ENCODE measurements at regions of chr11 and their contacts with region 1.

Region 1: DNA sequence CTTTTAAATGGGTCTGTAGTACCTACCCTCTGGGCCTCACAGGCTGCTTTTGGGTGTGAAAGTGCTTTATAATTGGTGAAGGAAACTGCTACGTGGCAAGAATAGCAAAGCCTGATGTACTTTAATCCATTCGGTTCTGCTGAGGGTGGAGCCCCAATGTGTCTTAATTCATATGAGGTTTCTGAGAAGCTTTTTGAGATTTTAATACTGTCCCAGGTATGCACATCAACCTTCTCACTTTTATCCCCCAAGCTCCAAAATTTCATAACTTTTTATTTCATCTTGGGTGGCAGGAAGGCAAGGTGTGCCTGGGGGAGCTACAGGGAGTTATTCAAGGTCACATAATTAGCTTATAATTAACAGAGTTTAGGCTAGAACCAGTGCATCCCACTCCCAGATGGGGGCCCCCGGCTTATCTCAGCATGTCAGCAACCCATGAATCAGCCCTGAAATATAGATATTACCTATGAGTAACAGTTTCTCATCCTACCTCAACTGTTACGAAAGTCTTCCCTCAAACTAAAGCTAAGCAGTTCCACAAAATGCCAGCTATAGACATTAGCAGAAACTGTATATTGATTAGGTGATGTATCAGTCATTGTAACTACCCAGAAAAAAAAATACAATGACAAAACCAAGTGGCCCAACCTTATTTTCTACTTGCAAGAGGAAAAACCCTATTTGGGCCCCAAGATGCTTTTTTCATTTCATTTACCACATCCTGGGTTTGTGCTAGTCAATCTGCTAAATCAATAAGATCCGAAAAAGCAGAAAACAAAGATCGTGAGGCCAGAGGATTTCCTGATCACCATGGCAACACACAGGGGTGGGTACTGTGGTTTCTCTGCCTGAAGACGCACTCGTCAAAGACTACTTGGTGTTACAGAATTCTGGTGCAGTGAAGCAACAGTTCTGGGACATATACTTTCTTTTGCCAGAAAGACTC is 26.7 kb downstream of the CD44 start:
- DNase-seq: peak; percentile 96 to 98 (median 98)
- H3K4me3 ChIP-seq: peak overlapping the region; percentile 36 to 37
- H3K4me3 Mint-ChIP-seq: peak overlapping the region; percentile 77 to 87 (median 84)
- H3K27ac ChIP-seq: peak overlapping the region; percentile 96
- H3K27ac Mint-ChIP-seq: peak overlapping the region; percentile 93 to 100 (median 100)
- H3K4me1 ChIP-seq: peaks cover 98% of the 10 kb centered on the region
- H3K4me1 Mint-ChIP-seq: peaks cover 85 to 100% (median 94%) of the 10 kb centered on the region in 4 donors
- H3K27me3 ChIP-seq: no peaks in the 10 kb centered on the region
- H3K27me3 Mint-ChIP-seq: no peaks in the 10 kb centered on the region

Region 2: DNA sequence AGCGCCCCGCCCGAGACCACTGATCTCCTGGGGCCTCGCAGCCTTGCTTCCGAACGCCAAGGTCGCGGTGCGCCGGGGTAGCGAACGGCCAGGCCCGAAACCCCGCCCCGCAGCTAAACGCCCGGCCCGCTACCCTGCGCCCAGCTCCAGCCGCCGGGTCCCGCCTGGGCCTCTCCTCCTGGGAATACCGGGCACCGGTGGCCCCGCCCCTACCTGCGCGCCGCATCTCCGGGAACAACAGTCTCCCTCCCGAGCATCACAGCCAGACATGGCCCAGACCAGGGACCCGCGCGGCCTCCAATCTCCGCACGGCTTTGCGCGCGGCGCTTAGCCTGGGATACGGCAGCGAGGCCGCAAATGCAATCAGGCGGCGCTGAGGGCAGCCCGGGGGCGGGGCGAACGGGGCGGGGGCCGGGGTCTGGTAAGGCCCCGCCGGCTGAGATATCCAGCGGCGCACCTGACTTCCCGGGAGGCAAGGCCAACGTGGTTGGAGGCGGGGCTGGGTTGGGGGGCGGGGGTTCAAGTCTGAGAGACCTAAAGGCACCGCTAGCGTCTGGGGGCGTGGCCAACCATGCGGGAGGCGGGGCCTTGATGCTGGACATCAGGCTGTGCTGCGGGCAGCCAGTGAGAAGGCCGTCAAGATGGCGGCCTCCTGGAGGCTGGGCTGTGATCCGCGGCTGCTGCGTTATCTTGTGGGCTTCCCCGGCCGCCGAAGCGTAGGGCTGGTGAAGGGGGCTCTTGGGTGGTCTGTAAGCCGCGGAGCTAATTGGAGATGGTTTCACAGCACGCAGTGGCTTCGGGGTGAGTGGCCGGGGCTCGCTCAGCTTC is 249.5 kb before region 1 on chr11 and contains the starts of genes APIP and PDHX:
- CTCF ChIA-PET with region 1: no interaction called
- POLR2A ChIA-PET with region 1: no interaction called
- intact Hi-C with region 1: loop called (anchors 5 kb)
- DNase-seq: peak; percentile 83 to 95 (median 85)
- H3K4me3 ChIP-seq: peak within 1 kb of the TSS; percentile 93 to 95
- H3K4me3 Mint-ChIP-seq: peak within 1 kb of the TSS; percentile 90 to 100 (median 96)
- H3K27ac ChIP-seq: peak within 1 kb of the TSS; percentile 81
- H3K27ac Mint-ChIP-seq: peak within 1 kb of the TSS; percentile 95 to 99 (median 97)
- H3K4me1 ChIP-seq: peaks cover 29% of the 10 kb centered on the region
- H3K4me1 Mint-ChIP-seq: peaks cover 31 to 55% (median 40%) of the 10 kb centered on the region in 4 donors
- H3K27me3 ChIP-seq: no peaks in the 10 kb centered on the region
- H3K27me3 Mint-ChIP-seq: no peaks in the 10 kb centered on the region
- total RNA-seq, gene APIP: 17.7 to 18.4 TPM
- total RNA-seq, gene PDHX: 39.1 to 43.5 TPM

Region 3: GRCh38 chr11:35013514-35014233 is 152.0 kb before region 1 on chr11:
- CTCF ChIA-PET with region 1: interaction called, 3 read pairs
- POLR2A ChIA-PET with region 1: interaction called, 10 read pairs
- intact Hi-C with region 1: no loop called
- DNase-seq: peak; percentile 61 to 87 (median 75)
- H3K4me3 ChIP-seq: no peak overlapping the region
- H3K4me3 Mint-ChIP-seq: peak overlapping the region; percentile 11 to 87 (median 71)
- H3K27ac ChIP-seq: peak overlapping the region; percentile 70
- H3K27ac Mint-ChIP-seq: peak overlapping the region; percentile 93 to 100 (median 97)
- H3K4me1 ChIP-seq: peaks cover 26% of the 10 kb centered on the region
- H3K4me1 Mint-ChIP-seq: peaks cover 23 to 57% (median 37%) of the 10 kb centered on the region in 4 donors
- H3K27me3 ChIP-seq: no peaks in the 10 kb centered on the region
- H3K27me3 Mint-ChIP-seq: no peaks in the 10 kb centered on the region

Region 4: GRCh38 chr11:35082321-35083182 is 83.1 kb before region 1 on chr11:
- CTCF ChIA-PET with region 1: interaction called, 4 read pairs
- POLR2A ChIA-PET with region 1: interaction called, 49 read pairs
- intact Hi-C with region 1: loop called (anchors 1 kb)
- DNase-seq: peak; percentile 89 to 96 (median 93)
- H3K4me3 ChIP-seq: peak overlapping the region; percentile 50 to 57
- H3K4me3 Mint-ChIP-seq: peak overlapping the region; percentile 78 to 90 (median 84)
- H3K27ac ChIP-seq: peak overlapping the region; percentile 97
- H3K27ac Mint-ChIP-seq: peak overlapping the region; percentile 94 to 99 (median 98)
- H3K4me1 ChIP-seq: peaks cover 85% of the 10 kb centered on the region
- H3K4me1 Mint-ChIP-seq: peaks cover 73 to 100% (median 87%) of the 10 kb centered on the region in 4 donors
- H3K27me3 ChIP-seq: no peaks in the 10 kb centered on the region
- H3K27me3 Mint-ChIP-seq: no peaks in the 10 kb centered on the region

Region 5: GRCh38 chr11:35182317-35182939 is 16.7 kb after region 1 on chr11:
- CTCF ChIA-PET with region 1: interaction called, 118 read pairs
- POLR2A ChIA-PET with region 1: interaction called, 368 read pairs
- intact Hi-C with region 1: loop called (anchors 2 kb)
- DNase-seq: peak in 1 of 5 donors; percentile 30
- H3K4me3 ChIP-seq: no peak overlapping the region
- H3K4me3 Mint-ChIP-seq: peak overlapping the region in 6 of 8 donors; percentile 30 to 82 (median 48)
- H3K27ac ChIP-seq: peak overlapping the region; percentile 13
- H3K27ac Mint-ChIP-seq: peak overlapping the region; percentile 73 to 95 (median 91)
- H3K4me1 ChIP-seq: peaks cover 88% of the 10 kb centered on the region
- H3K4me1 Mint-ChIP-seq: peaks cover 65 to 87% (median 75%) of the 10 kb centered on the region in 4 donors
- H3K27me3 ChIP-seq: no peaks in the 10 kb centered on the region
- H3K27me3 Mint-ChIP-seq: no peaks in the 10 kb centered on the region

Region 6: DNA sequence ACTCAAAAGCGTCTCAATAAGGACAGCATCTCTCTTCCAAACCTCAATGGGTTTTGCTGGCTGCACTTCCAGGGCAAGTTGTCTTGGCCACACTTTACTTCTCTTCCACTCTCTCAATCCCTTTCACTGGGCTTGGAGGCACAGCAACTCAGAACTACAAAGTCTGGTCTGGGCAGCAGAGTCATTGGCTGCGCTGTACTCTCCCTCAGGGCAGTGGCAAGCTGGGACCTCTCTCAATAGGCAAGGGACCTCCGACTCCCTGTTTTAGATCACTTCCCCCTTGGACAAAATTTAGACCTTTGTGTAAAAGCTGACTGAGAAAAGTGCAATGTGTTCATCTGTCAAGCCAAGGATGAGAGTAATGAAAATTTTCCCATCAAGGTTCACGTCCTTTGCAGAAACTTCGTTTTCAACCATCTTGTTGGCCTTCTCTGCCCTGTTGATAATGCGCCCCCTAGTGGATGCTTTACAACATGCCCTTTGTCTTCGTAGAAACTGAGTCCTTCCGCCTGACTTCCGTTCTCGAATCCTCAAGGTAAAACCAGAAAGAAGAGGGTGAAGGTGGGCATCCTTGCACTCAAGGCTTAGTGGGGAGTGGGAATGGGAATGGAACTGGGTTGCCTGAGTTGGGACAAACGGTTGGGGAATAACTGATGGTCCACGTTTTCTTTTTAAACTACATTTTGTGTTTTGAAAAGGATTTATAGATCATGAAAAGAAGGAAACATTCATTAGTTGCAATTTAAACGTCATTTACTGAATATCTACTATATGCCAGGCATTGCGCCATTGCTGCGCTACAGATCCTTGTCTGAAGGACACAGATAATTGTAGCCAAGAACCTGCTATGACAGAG is 72.4 kb after region 1 on chr11:
- CTCF ChIA-PET with region 1: interaction called, 7 read pairs
- POLR2A ChIA-PET with region 1: interaction called, 39 read pairs
- intact Hi-C with region 1: loop called (anchors 1 kb)
- DNase-seq: peak; percentile 50 to 64 (median 55)
- H3K4me3 ChIP-seq: no peak overlapping the region
- H3K4me3 Mint-ChIP-seq: peak overlapping the region in 6 of 8 donors; percentile 4 to 66 (median 38)
- H3K27ac ChIP-seq: no peak overlapping the region
- H3K27ac Mint-ChIP-seq: peak overlapping the region; percentile 78 to 97 (median 90)
- H3K4me1 ChIP-seq: peaks cover 73% of the 10 kb centered on the region
- H3K4me1 Mint-ChIP-seq: peaks cover 61 to 94% (median 76%) of the 10 kb centered on the region in 4 donors
- H3K27me3 ChIP-seq: no peaks in the 10 kb centered on the region
- H3K27me3 Mint-ChIP-seq: no peaks in the 10 kb centered on the region

Region 7: GRCh38 chr11:35288817-35289541 is 123.3 kb after region 1 on chr11:
- CTCF ChIA-PET with region 1: no interaction called
- POLR2A ChIA-PET with region 1: no interaction called
- intact Hi-C with region 1: no loop called
- DNase-seq: no peak
- H3K4me3 ChIP-seq: no peak overlapping the region
- H3K4me3 Mint-ChIP-seq: no peak overlapping the region
- H3K27ac ChIP-seq: no peak overlapping the region
- H3K27ac Mint-ChIP-seq: no peak overlapping the region
- H3K4me1 ChIP-seq: peaks cover 8% of the 10 kb centered on the region
- H3K4me1 Mint-ChIP-seq: peaks cover 4 to 17% (median 12%) of the 10 kb centered on the region in 4 donors
- H3K27me3 ChIP-seq: no peaks in the 10 kb centered on the region
- H3K27me3 Mint-ChIP-seq: no peaks in the 10 kb centered on the region

Region 8: DNA sequence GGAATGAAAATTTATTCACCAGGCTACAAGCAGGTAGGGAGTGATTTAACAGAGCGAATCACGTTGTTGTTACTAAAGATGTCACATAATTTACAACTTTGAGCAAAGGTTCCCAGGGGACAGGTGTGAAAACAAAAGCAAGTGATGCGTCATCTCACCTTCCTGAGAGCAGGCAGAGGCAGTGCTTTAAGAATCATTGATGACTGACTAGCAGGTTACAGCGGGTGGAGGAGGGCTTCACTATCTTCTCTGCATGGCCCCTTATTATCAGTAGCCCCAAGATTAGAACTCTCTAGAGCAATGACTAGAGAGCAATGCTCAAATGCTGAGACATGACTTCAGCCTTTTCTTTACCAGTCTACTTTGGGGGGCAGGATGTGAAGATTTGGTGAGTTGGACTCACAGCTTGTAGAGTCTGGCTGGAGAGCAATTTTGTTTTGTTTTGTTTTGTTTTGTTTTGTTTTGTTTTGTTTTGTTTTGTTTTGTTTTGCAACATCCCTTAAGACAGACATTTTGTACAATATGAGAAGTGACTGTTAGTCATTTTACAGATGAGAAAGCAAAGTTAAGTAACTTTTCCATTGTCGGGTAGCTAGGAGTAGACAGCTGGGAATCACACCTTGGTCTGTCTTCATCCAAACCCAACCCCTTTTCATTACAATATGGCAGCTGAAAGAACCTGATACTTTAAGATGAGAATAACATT is 168.8 kb after region 1 on chr11:
- CTCF ChIA-PET with region 1: no interaction called
- POLR2A ChIA-PET with region 1: interaction called, 12 read pairs
- intact Hi-C with region 1: no loop called
- DNase-seq: peak; percentile 22 to 63 (median 26)
- H3K4me3 ChIP-seq: no peak overlapping the region
- H3K4me3 Mint-ChIP-seq: peak overlapping the region in 2 of 8 donors; percentile 31 to 59
- H3K27ac ChIP-seq: no peak overlapping the region
- H3K27ac Mint-ChIP-seq: peak overlapping the region; percentile 19 to 93 (median 82)
- H3K4me1 ChIP-seq: peaks cover 42% of the 10 kb centered on the region
- H3K4me1 Mint-ChIP-seq: peaks cover 35 to 47% (median 42%) of the 10 kb centered on the region in 4 donors
- H3K27me3 ChIP-seq: no peaks in the 10 kb centered on the region
- H3K27me3 Mint-ChIP-seq: peaks cover 0 to 2% of the 10 kb centered on the region in 2 donors